Posterior vena cava (tissue), 2 donors: ENCODE measurements at regions of chr13 and their contacts with region 1.

Region 1: DNA sequence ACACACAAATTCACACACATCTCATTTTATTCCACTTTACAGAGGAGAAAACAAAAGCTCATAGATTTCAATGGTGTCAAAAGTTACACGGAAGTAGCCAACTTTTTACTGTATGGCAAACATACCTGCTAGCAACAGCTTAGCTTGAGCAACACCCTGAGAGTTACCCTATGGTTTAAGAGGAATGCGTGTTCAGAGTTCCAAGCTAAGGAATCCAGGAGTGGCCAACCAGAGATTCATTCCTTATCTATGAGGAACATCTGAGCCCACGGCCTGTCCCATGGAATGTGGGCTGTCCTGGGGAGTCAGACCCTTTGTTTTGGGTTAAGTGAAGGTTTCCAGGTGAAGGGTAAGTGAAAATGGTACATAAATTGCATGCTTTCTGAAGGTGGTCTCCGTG is 67.6 kb downstream of the STARD13 start:
- DNase-seq: no peak

Region 2: DNA sequence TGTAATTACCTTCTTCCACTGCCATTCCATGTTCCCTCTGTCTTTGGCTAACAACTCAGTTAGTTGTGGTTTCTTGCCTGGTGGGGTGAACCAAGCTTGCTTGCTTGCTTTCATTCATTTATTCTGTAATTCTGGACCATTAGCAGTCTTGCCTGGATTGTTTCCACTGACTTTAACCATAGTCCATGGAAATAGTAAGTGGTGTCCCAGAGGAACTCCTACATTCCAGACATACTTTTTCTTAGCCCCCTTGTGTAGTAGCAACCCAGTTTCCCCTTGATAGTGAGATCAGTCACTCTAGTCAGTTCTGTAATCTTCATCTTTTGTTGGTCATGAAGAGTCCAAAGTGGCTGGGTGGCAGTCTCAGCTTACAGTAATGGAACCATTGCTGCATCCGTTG is 608.6 kb before region 1 on chr13:
- intact Hi-C with region 1: loop called in 1 of 2 experiments (anchors 5 kb)
- DNase-seq: no peak